Cardiac septum (tissue), 1 donor: ENCODE measurements at regions of chr1 and their contacts with region 1.

Region 1: DNA sequence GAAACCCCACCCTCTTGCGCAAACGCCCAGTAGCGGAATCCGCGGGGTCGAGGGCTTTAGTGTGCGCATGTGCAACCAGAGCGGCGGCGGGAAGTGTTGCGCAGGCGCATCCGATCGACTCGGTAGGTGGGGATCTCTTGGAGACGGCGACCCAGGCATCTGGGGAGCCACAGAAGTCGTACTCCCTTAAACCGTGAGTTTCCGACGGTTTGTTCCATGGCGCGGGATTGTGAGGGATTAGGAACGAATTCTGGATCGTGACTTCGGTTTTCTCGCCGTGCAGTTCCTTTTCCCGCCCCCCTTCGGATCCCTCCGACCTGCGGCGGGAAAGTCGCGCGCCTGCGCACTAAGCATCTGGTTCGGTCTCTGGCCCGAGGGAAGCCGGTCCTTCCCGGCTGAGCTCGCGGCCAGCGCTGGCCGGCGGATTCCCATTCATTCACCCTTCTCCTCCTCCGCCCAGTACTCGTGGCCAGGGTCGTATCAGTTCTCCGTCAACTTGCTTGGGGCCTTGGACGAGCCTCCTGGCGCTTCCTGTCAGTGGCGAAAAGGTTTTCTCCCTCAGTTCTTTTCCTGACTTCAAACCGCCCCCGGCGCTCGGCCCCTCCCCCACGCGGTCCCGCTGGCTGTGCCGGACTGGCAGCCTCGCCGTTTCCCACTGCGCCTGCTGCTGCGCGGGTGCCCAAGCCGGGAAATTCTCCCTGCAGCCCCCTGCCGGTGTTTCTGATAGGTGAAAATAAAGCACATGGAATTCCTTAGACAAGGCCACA is at the start of gene CDC7:
- DNase-seq: peak; percentile 95
- total RNA-seq, gene CDC7: 1.6 TPM

Region 2: DNA sequence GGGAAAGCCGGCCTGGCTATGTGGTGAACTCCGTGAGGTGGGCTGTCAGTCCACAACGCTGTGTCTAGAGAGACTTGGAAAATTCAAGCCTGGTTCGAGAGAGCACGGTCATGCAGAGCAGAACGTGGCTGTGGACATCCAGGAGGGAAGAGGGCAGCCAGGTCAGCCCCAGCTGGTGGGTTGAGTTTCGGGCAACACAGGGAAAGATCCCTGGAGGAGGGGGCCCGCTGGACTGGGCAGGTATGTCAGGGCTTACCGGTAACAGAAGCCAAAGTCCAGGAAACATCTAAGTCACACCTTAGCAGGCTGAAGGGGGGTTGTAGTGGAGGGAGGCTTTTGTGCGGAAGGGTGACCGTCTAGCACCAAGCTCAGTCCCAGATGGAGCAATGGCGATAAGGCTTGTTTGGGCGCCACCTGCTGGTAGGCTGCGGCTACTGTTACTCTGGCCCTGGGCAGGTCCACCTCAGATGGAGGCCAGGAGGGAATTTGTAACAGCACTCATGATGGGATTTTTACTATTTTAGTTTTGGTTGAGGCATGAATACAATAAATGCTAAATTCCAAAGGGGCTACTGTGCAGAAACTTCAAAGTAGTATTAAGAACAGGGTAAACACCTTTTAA is 335.8 kb before region 1 on chr1:
- intact Hi-C with region 1: loop called (anchors 10 kb)
- DNase-seq: peak; percentile 87

Region 3: DNA sequence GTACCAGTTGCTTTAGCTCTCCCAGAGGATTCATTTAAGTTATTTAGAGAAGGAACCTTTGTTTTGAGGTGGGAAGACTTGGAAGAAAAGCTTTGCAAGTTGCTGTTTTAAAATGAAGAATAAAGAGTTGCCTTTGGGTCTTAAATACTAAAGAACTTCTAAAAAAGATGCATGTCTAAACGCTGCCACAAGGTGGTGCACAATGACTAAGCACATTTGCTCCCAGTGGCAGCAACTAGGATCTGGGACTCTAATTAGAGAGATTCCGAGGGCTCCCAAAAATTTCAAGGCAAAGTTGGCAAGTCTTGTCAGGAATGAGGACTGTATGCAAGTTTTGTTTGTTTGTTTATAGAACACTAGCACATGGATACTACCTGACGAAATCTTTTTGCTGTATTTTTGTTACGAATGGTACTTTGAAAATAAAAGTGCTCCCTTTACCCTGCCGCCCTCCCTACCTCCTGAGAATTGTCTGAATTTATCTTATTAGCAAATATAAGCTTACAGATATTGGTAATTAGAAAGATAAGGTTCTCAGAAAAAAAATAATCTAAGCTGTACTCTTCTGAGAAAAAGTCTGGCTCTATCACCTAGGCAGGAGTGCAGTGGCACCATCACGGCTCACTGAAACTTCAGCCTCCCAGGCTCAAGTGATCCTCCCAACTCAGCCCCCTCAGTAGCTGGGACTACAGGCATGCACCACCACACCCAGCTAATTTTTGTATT is 218.1 kb before region 1 on chr1:
- intact Hi-C with region 1: loop called (anchors 5 kb)
- DNase-seq: no peak

Region 4: DNA sequence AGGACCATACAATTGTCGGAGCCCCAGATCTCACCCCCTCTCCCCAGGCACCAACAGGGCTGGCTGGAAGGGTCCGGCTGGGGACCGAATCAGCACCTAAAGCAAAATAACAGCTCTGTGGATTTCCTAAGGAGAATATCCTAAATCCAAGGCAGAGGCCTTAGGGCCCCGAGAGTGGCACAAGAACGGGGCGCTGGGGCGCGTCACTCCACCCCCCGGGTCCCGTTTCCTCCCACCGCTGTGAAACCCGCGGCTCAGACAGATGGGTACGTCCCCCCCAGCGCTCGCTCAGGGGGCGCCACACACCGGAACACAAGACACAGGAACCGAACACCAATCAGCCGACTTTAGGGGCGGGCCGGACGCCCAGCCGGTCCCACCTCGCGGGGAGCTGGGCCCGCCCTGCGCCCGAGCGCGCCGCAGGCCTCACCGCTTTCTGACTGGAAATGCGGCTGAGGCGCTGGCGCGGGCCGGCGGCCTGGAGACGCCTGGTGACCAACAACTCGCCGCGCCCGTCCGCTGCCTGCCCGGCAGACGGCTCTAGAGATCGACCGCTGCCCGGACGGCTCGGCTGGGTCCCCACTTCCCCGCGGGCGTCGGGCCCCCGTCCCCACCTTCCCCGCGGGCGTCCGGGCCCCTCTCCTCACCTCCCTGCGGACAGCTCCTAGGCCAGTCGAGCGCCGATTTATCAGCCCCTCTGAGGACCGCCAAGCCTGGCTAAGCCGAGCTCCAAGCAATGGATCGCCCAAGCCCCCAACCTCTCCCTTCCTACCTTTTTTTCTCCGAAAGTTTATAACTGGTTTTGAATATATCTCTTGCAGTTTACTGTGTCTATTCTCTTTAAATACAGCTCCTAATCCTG is 96.6 kb before region 1 on chr1 and contains the start of gene HFM1:
- intact Hi-C with region 1: loop called (anchors 2 kb)
- DNase-seq: peak; percentile 90
- total RNA-seq, gene HFM1: 2.7 TPM

Region 5: GRCh38 chr1:91529856-91530255 is 28.9 kb after region 1 on chr1:
- intact Hi-C with region 1: no loop called
- DNase-seq: no peak

Region 6: GRCh38 chr1:91578332-91579109 is 77.6 kb after region 1 on chr1:
- intact Hi-C with region 1: no loop called
- DNase-seq: no peak

Region 7: GRCh38 chr1:91697416-91697815 is 196.5 kb after region 1 on chr1:
- intact Hi-C with region 1: loop called (anchors 5 kb)
- DNase-seq: no peak

Region 8: DNA sequence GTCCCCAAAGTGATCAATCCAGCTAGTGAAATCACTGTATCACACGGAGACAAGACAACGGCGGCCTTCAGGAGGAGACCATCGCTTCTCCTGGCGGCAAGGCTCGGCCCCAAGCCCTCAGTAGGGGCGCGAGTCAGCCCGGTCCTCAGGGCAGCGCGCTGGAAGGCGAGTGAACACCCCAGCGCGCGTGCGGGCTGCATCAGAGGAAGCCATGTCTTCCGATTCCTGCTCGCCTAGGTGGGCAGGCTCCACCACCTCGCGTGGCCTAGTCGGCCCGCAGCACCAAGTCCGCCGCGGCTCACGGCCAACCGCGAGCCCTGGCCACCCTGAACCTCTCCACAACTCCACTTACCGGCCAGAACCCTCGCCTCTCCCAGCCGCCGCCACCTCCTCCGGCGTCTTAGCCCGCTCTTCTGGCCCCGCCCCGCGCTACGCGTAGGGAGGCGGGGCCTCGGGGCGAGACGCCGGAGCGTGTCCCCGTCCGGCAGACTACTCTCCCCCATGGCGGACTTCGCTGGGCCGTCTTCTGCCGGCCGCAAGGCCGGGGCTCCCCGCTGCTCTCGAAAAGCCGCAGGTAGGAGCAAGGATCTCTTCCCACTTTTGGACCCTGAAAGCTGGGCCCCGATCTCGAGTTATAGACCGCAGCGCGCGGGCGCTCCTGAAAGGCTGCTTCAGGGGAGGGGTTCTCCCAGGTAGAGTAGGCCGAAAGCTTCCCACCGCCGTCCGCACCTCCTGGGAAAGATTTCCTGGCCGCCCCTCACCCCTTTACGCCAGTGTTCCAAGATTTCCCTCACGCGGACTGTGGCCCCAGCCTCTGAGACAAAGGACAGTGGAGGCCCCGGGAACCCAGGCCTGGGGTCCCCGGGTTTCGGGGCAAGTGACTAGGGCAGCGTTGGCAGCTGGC is 797.9 kb after region 1 on chr1 and contains the starts of genes GLMN and RPAP2:
- intact Hi-C with region 1: loop called (anchors 5 kb)
- DNase-seq: peak; percentile 93
- total RNA-seq, gene GLMN: 5.8 TPM
- total RNA-seq, gene RPAP2: 22.1 TPM